Sciatic nerve (tissue), 2 donors: ENCODE measurements at regions of chr5 and their contacts with region 1.

Region 1: GRCh38 chr5:68456756-68457217 is 241.2 kb downstream of the PIK3R1 start:
- DNase-seq: no peak
- ATAC-seq: peak; percentile 52

Region 2: GRCh38 chr5:68287976-68288706 is 168.6 kb before region 1 on chr5:
- intact Hi-C with region 1: loop called (anchors 5 kb)
- DNase-seq: peak; percentile 76
- ATAC-seq: peak; percentile 73

Region 3: DNA sequence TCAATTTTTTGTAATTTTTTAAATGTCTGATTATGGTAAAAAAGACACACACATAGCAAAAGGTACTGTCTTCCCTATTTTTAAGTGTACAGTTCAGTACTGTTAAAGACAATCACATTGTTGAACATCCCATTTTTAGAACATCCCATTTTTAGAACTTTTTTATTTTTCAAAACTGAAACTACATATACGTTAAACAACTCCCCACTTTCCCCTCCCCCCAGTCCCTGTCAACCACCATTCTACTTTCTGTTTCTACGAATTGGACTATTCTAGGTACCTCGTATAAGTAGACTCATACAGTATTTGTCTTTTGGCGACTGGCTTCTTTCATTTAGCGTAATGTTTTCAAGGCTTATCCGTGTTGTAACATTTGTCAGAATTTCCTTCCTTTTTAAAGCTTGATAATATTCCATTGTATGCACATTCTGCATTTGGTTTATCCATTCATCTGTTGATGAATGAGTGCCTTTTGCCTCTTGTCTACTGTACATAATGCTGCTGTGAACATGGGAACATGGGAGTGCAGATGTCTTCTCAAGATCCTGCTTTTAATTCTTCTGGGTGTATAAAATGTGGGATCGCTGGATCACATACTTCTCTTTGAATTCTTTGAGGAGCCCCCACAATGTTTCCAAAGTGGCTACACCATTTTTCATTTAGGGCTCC is 87.2 kb before region 1 on chr5:
- intact Hi-C with region 1: no loop called
- DNase-seq: no peak
- ATAC-seq: no peak